ENCODE measurements at regions of chr17 and their contacts with region 1.

Region 1: GRCh38 chr17:41918314-41919164 is at the start of gene ACLY:
- DNase-seq: peak; percentile 100
- H3K4me3 Mint-ChIP-seq: peak within 1 kb of the TSS; percentile 96
- H3K27ac Mint-ChIP-seq: peak within 1 kb of the TSS; percentile 81
- H3K4me1 Mint-ChIP-seq: peaks cover 45% of the 10 kb centered on the region
- H3K27me3 Mint-ChIP-seq: no peaks in the 10 kb centered on the region
- CTCF ChIP-seq: no peak
- total RNA-seq, gene ACLY: 258 and 265 TPM in 2 replicates

Region 2: GRCh38 chr17:41907185-41907556 is 11.4 kb before region 1 on chr17:
- CTCF ChIA-PET with region 1: interaction called, 12 read pairs
- intact Hi-C with region 1: no loop called
- DNase-seq: no peak
- H3K4me3 Mint-ChIP-seq: no peak overlapping the region
- H3K27ac Mint-ChIP-seq: peak overlapping the region; percentile 17
- H3K4me1 Mint-ChIP-seq: peaks cover 37% of the 10 kb centered on the region
- H3K27me3 Mint-ChIP-seq: no peaks in the 10 kb centered on the region
- CTCF ChIP-seq: no peak

Region 3: DNA sequence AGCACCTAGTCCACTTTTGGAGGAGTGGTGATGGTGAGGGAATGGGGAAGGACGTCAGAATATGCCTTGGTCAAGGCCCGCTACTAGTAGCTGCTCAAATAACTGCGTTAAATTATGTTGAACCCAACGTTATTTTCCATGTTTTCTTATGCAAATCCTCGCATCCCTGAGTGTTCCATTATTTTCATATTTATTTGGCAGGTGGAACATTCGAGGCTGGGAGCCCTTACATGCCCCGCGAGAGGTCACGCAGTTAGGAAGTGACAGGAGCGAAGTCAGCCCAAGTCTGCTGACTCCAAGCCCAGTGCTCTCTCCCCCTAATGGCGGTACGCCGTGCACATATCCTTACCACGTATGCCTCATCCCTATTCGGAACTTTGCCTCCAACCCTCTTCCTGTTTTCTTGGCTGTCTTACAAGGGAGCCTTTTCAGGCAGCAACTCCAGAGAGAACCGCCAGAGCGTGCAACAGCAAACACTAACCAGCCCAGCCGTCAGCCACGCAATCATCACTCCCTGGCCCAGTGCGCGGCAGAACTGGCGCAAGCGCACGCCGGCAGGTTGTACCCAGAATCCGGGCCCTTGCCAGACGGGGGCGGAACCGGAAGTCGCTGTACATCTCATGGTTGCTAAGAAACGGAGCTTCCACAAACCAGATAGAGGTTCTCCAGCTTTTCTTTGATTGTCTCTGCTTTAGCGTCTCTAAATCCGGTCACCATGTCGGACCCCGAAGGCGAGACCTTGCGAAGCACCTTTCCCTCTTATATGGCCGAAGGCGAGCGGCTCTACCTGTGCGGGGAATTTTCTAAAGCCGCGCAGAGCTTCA is 11.7 kb after region 1 on chr17 and contains the start of gene ODAD4:
- CTCF ChIA-PET with region 1: interaction called, 15 read pairs
- intact Hi-C with region 1: no loop called
- DNase-seq: peak; percentile 99
- H3K4me3 Mint-ChIP-seq: peak within 1 kb of the TSS; percentile 84
- H3K27ac Mint-ChIP-seq: peak within 1 kb of the TSS; percentile 83
- H3K4me1 Mint-ChIP-seq: peaks cover 11% of the 10 kb centered on the region
- H3K27me3 Mint-ChIP-seq: no peaks in the 10 kb centered on the region
- CTCF ChIP-seq: no peak
- total RNA-seq, gene ODAD4: 0.73 and 2.7 TPM in 2 replicates